Naive thymus-derived CD4-positive, alpha-beta T cell (primary cell): ENCODE measurements at regions of chr19 and their contacts with region 1.

Region 1: DNA sequence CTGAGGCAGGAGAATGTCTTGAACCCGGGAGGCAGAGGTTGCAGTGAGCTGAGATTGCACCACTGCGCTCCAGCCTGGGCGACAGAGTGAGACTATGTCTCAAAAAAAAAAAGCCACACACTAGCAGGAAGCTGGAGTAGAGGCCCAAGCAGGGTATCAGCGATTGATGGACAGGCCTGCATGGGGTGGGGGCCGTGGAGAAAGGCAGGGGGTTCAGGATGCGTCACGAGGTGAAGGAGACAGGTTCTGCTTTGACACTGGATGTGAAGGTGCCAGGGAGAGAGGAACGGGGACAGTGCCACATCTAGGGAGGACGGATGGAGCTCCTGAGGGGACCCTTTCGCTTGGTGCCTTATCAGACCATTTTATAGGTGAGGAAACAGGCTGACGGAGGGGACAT is 7.1 kb downstream of the COLGALT1 start:
- DNase-seq: no peak
- ATAC-seq: no peak
- H3K4me3 ChIP-seq: no peak overlapping the region
- H3K4me3 Mint-ChIP-seq: no peak overlapping the region
- H3K27ac ChIP-seq: no peak overlapping the region
- H3K27ac Mint-ChIP-seq: peak overlapping the region in 1 of 9 donors; percentile 7
- H3K4me1 ChIP-seq: no peaks in the 10 kb centered on the region
- H3K4me1 Mint-ChIP-seq: peaks cover 0 to 13% (median 10%) of the 10 kb centered on the region in 7 donors
- H3K27me3 ChIP-seq: no peaks in the 10 kb centered on the region
- H3K27me3 Mint-ChIP-seq: no peaks in the 10 kb centered on the region

Region 2: DNA sequence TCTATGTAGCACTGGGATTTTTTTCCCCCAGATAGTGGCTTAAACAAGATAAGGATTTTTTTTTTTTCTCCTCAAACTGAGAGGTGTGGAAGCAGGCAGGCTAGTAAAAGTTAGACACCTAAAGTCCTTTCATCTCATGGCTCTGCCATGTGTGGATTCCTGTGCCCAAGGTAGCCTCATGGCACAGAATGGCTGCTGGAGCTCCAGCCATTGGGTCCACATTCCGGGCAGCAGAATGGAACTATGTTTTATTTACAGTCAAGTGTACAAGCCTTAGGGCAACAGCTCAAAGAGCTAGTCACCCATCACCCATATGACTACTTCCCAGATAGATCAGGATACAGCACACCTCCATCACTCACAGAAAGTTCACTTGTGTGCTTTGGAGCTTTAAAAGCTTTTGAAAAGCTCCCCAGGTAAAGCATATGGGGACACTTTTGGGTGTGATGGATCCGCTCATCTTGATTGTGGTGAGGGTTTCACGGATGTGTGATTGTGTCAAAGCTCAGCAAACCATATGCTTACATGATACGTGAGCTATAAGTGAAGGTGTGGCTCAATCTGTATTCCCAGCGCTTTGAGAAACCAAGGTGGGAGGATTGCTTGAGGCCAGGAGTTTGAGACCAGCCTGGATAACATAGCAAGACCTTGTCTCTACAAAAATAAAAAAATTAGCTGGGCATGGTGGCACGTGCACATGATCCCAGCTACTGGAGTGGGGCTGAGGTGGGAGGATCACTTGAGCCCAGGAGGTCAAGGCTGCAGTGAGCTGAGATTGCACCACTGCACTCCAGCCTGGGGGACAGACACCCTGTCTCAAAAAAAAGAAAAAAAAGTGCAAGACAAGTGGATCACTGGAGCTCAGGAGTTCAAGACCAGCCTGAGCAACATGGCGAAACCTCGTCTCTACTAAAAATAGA is 33.1 kb before region 1 on chr19:
- CTCF ChIA-PET with region 1: interaction called, 10 read pairs
- POLR2A ChIA-PET with region 1: no interaction called
- intact Hi-C with region 1: loop called in 1 of 2 experiments (anchors 1 kb)
- DNase-seq: no peak
- ATAC-seq: no peak
- H3K4me3 ChIP-seq: no peak overlapping the region
- H3K4me3 Mint-ChIP-seq: no peak overlapping the region
- H3K27ac ChIP-seq: no peak overlapping the region
- H3K27ac Mint-ChIP-seq: peak overlapping the region in 2 of 9 donors; percentile 18 to 19
- H3K4me1 ChIP-seq: peaks cover 0 to 6% of the 10 kb centered on the region in 2 donors
- H3K4me1 Mint-ChIP-seq: peaks cover 0 to 8% (median 6%) of the 10 kb centered on the region in 7 donors
- H3K27me3 ChIP-seq: no peaks in the 10 kb centered on the region
- H3K27me3 Mint-ChIP-seq: peaks cover 0 to 3% (median 0%) of the 10 kb centered on the region in 5 donors

Region 3: GRCh38 chr19:17582613-17583012 is 20.1 kb after region 1 on chr19:
- CTCF ChIA-PET with region 1: no interaction called
- POLR2A ChIA-PET with region 1: no interaction called
- intact Hi-C with region 1: no loop called
- DNase-seq: no peak
- ATAC-seq: no peak
- H3K4me3 ChIP-seq: no peak overlapping the region
- H3K4me3 Mint-ChIP-seq: no peak overlapping the region
- H3K27ac ChIP-seq: no peak overlapping the region
- H3K27ac Mint-ChIP-seq: peak overlapping the region in 1 of 9 donors; percentile 38
- H3K4me1 ChIP-seq: no peaks in the 10 kb centered on the region
- H3K4me1 Mint-ChIP-seq: peaks cover 0 to 9% (median 0%) of the 10 kb centered on the region in 7 donors
- H3K27me3 ChIP-seq: no peaks in the 10 kb centered on the region
- H3K27me3 Mint-ChIP-seq: no peaks in the 10 kb centered on the region